PC-3 (cell line): ENCODE measurements at regions of chr5 and their contacts with region 1.

Region 1: GRCh38 chr5:155004138-155004744 is 9.3 kb upstream of the KIF4B start:
- DNase-seq: peak; percentile 56
- ATAC-seq: peak; percentile 84
- H3K4me3 ChIP-seq: no peak overlapping the region
- H3K27ac ChIP-seq: no peak overlapping the region
- H3K4me1 ChIP-seq: peaks cover 4% of the 10 kb centered on the region
- H3K27me3 ChIP-seq: no peaks in the 10 kb centered on the region
- CTCF ChIP-seq: peak; percentile 72

Region 2: DNA sequence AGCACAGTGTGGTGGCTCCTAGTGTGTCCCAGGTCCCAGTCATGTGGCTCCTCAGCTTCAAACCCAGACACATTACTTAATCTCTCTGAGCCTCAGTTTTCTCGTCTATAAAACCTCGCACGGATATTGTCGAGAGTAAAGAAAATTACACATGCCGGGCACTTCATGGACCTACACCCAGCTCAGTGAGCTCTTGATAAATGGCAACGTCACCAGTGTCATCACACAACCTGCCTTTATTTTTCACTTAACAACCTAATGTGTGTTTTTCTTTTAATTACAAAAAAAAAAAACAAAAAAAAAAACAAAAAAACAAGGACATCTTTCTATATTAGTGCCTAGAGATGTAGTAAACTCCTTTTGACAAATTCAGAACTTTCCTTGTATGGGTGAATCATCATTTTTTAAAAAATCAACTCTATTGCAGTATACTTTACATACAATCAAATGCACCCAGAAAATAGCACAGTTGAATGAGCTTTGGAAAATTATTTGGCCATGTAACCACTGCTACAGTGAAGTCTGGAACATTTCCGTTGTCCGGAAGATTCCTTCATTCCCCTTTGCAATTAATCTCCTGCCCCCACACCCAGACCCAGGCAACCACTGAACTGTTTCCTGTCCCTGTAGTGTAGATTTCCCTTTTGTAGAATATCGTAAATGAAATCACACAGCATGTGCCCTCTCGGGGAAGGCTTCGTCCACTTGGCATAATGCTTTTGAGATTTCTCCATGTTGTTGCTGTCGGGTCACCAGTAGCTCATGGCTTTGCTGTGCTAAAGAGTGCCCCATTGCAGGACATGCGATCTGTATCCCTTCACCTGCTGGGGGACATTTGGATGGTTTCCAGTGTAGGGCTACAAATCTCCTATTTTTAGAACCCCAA is 349.5 kb before region 1 on chr5:
- CTCF ChIA-PET with region 1: interaction called, 4 read pairs
- POLR2A ChIA-PET with region 1: no interaction called
- intact Hi-C with region 1: loop called (anchors 5 kb)
- DNase-seq: no peak
- ATAC-seq: no peak
- H3K4me3 ChIP-seq: no peak overlapping the region
- H3K27ac ChIP-seq: no peak overlapping the region
- H3K4me1 ChIP-seq: no peaks in the 10 kb centered on the region
- H3K27me3 ChIP-seq: no peaks in the 10 kb centered on the region
- CTCF ChIP-seq: no peak

Region 3: DNA sequence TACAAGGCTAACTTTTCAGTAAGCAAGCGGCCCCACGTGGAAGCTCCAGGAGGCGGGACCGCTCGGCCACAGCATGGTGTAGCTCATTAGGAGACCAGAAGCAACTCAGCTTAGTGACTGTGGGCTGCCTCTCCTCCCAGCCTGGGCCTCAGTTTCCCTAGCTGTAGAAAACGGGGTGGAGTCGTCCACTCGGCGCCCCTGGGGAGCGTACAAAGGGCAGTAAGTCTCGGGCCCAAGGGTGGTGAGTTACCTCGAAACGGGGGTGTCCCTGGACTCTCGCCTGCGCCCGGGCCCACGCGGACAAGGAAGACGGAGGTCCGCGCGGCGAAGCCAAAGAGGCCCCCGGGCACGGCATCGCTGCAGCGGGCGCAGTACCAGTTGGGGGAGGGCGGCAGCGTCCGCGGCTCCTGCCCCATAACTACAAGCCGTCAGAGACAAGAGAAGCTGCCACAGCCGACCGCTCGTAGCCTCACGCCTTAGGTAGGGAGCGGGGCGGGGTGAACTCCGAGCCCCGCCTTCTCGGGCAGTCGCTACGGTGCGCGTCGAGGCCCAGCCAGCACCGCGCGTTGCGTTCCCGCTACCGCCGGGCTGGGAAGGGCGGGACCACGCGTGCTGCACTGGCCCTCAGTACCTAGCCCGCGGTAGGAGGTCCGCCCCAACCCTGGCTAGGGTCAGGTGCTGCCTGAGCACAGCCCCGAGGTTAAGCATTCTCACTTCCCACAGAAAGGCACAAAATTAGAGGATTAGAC is 66.3 kb before region 1 on chr5 and contains the start of gene GEMIN5:
- CTCF ChIA-PET with region 1: no interaction called
- POLR2A ChIA-PET with region 1: no interaction called
- intact Hi-C with region 1: no loop called
- DNase-seq: peak; percentile 86
- ATAC-seq: peak; percentile 85
- H3K4me3 ChIP-seq: peak within 1 kb of the TSS; percentile 91
- H3K27ac ChIP-seq: no peak within 1 kb of the TSS
- H3K4me1 ChIP-seq: peaks cover 18% of the 10 kb centered on the region
- H3K27me3 ChIP-seq: no peaks in the 10 kb centered on the region
- CTCF ChIP-seq: no peak
- total RNA-seq, gene GEMIN5: 19.8 and 28.2 TPM in 2 replicates

Region 4: DNA sequence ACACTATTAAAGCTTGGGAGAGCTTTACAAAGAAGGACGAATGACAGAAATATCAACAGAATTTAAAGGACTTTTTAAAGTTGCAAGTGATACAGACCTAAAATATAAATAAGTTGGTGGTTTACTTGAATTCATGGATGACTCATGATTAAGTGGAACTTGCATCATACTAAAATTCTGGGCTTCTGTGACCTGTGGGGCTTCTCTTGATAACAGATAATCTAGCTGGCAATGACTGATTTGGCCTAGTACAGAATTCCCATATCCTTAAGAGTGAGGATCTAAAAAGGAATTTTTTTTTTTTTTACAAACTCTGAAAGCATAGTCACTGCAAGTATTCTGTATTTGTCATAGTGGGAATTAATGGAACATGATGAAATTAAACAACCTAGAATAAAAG is 779.0 kb after region 1 on chr5:
- CTCF ChIA-PET with region 1: no interaction called
- POLR2A ChIA-PET with region 1: no interaction called
- intact Hi-C with region 1: no loop called
- DNase-seq: no peak
- ATAC-seq: no peak
- H3K4me3 ChIP-seq: no peak overlapping the region
- H3K27ac ChIP-seq: no peak overlapping the region
- H3K4me1 ChIP-seq: no peaks in the 10 kb centered on the region
- H3K27me3 ChIP-seq: no peaks in the 10 kb centered on the region
- CTCF ChIP-seq: no peak